Psoas muscle (tissue), 8 donors: ENCODE measurements at regions of chr22 and their contacts with region 1.

Region 1: GRCh38 chr22:41589391-41590241 is at the start of gene PMM1:
- DNase-seq: peak; percentile 100
- ATAC-seq: peak; percentile 98 to 100 (median 99)
- H3K4me3 ChIP-seq: peak within 1 kb of the TSS; percentile 86
- H3K27ac ChIP-seq: peak within 1 kb of the TSS; percentile 65
- H3K4me1 ChIP-seq: peaks cover 7% of the 10 kb centered on the region
- H3K27me3 ChIP-seq: no peaks in the 10 kb centered on the region
- CTCF ChIP-seq: no peak
- total RNA-seq, gene PMM1: 7.3 to 12.2 (median 9.2) TPM

Region 2: DNA sequence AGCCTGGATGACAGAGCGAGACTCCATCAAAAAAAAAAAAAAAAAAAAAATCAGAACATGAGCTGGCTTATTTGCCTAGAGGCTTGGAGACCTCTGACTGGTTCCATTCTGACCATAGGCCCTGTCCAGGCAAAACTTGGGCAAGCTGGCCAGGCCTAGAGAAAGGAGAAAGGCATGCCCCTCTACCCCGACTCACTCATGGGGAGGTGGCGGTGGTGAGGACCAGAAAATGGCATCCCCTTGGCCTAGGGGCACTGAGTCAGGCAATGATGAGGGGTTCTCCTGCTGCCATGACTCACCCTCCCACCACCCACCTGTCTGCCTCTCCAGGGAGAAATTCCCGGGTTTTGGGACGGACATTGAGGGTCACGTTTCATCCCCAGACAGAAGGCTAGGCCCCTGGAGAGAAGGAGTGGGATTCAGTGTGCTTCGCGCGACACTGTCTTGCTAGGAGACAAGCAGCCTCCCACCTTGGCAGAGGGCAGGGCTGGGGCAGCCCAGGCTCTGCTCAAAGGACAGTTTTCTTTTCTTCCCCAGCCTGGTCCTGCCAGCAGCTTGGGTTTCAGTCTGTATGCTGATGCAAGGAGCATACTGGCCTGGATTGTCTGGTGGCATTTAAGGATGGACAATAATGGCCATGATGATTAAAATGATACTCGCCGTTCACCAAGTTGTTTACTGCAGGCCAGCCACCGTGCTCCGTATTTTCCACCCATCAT is 160.2 kb before region 1 on chr22:
- intact Hi-C with region 1: no loop called
- DNase-seq: peak; percentile 45 to 87
- ATAC-seq: peak; percentile 73 to 78 (median 76)
- H3K4me3 ChIP-seq: no peak overlapping the region
- H3K27ac ChIP-seq: peak overlapping the region; percentile 77
- H3K4me1 ChIP-seq: peaks cover 44% of the 10 kb centered on the region
- H3K27me3 ChIP-seq: no peaks in the 10 kb centered on the region
- CTCF ChIP-seq: no peak

Region 3: GRCh38 chr22:41544671-41545476 is 44.7 kb before region 1 on chr22:
- intact Hi-C with region 1: loop called (anchors 5 kb)
- DNase-seq: no peak
- ATAC-seq: no peak
- H3K4me3 ChIP-seq: peak overlapping the region; percentile 88
- H3K27ac ChIP-seq: peak overlapping the region; percentile 36
- H3K4me1 ChIP-seq: peaks cover 13% of the 10 kb centered on the region
- H3K27me3 ChIP-seq: no peaks in the 10 kb centered on the region
- CTCF ChIP-seq: no peak

Region 4: DNA sequence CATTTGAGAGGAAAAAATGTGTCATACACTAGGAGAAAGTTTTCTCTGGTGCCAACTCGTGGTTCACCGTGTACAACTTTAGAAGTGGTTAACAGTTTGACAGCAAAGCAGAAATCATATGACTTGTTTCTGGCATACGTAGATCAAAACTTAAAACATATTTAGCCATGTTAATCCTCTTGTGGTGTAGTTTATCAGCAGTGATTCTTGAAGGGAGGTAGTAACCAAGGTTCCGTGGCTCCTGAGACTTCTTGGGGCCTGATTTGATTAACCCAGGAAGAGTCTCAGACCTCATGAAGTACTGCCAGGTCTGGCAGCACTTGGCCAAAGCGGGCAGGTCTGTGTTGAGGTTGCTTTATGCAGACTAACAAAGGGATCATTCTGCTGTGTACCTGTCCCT is 283.8 kb after region 1 on chr22:
- intact Hi-C with region 1: no loop called
- DNase-seq: no peak
- ATAC-seq: peak; percentile 33 to 85 (median 54)
- H3K4me3 ChIP-seq: no peak overlapping the region
- H3K27ac ChIP-seq: peak overlapping the region; percentile 33
- H3K4me1 ChIP-seq: no peaks in the 10 kb centered on the region
- H3K27me3 ChIP-seq: no peaks in the 10 kb centered on the region
- CTCF ChIP-seq: no peak